Lower leg skin (tissue), 4 donors: ENCODE measurements at regions of chr17 and their contacts with region 1.

Region 1: GRCh38 chr17:59440784-59441441 is 109.5 kb downstream of the YPEL2 start:
- DNase-seq: peak; percentile 94 to 97
- H3K4me3 ChIP-seq: no peak overlapping the region
- CTCF ChIP-seq: peak in 1 of 3 donors; percentile 70
- POLR2A ChIP-seq: no peak

Region 2: GRCh38 chr17:59219992-59220375 is 220.9 kb before region 1 on chr17:
- intact Hi-C with region 1: loop called (anchors 5 kb)
- DNase-seq: no peak
- H3K4me3 ChIP-seq: no peak overlapping the region
- CTCF ChIP-seq: no peak
- POLR2A ChIP-seq: no peak

Region 3: GRCh38 chr17:59287452-59287851 is 153.5 kb before region 1 on chr17:
- intact Hi-C with region 1: no loop called
- DNase-seq: no peak
- H3K4me3 ChIP-seq: no peak overlapping the region
- CTCF ChIP-seq: no peak
- POLR2A ChIP-seq: no peak

Region 4: GRCh38 chr17:59311130-59311920 is 129.6 kb before region 1 on chr17:
- intact Hi-C with region 1: loop called (anchors 5 kb)
- DNase-seq: peak; percentile 45 to 74
- H3K4me3 ChIP-seq: no peak overlapping the region
- CTCF ChIP-seq: peak in 1 of 3 donors; percentile 79
- POLR2A ChIP-seq: no peak

Region 5: DNA sequence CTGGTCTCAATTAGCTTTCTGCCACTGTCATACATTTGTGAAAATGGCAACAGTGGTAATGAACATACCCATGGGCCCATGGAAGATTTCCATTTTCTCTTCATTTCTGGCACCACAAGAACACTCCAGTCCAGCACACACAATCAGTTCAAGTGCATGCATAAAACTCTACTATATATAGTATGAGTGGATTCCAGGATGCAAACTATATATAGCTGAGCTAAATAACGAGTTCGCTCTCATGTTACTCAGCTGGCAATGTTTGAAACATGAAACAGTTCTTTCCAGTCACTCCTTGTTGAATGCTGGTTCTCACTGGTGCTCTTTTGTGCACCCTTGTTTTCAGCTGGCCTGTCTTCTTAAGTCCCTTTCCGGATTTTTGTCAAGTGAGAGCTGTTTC is 49.3 kb after region 1 on chr17:
- intact Hi-C with region 1: no loop called
- DNase-seq: no peak
- H3K4me3 ChIP-seq: no peak overlapping the region
- CTCF ChIP-seq: no peak
- POLR2A ChIP-seq: no peak

Region 6: DNA sequence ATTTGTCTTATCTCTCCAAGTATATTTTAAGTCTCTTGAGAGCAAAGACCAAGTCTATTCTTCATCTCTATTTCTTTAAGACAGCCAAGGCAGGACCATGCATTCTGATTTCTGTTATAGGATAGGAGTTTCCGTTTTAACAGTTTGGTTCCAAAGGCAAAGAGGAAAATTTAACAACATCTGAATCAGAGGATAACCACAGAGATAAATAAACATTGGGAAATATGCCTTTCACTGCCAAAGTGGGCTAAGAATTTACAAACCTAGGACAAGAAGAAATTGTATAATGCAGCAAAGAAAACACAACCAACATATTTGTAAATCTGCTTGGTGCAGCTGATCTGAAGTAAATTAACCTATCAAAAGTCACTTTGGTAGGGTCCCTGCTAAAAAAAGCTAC is 913.3 kb after region 1 on chr17:
- intact Hi-C with region 1: no loop called
- DNase-seq: no peak
- H3K4me3 ChIP-seq: no peak overlapping the region
- CTCF ChIP-seq: no peak
- POLR2A ChIP-seq: no peak